ENCODE measurements at regions of chr4 and their contacts with region 1.

Region 1: GRCh38 chr4:7802093-7802726 is 137.5 kb downstream of the AFAP1 start:
- DNase-seq: peak; percentile 80
- H3K4me3 ChIP-seq: no peak overlapping the region; a peak in 1 of 4 replicates
- H3K27ac ChIP-seq: peak overlapping the region; percentile 19 to 67
- H3K4me1 ChIP-seq: peaks cover 20 to 30% of the 10 kb centered on the region in 2 experiments
- H3K27me3 ChIP-seq: no peaks in the 10 kb centered on the region
- CTCF ChIP-seq: peak; percentile 89
- EP300 ChIP-seq: no peak
- RAD21 ChIP-seq: peak; percentile 94

Region 2: DNA sequence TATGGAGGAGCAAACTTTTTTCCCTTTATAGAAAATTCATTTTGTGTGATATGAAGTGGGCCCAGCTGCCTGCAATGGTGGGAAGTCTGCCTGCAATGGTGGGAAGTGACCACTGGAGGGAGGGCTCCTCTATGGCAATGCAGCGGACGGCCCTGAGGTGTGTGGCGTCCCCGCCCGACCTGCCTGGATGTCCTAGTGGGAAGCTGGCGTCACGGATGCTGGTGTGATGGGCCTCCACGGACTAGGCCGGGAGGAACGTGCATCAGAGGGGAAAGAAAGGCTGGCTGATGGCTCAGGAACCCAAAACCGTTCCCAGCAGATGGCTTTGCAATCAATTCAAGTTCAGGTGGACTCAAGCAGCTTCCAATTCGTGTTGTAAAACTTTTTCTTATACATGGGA is 40.5 kb before region 1 on chr4:
- CTCF ChIA-PET with region 1: interaction called, 137 read pairs
- POLR2A ChIA-PET with region 1: no interaction called
- DNase-seq: peak; percentile 91
- H3K4me3 ChIP-seq: no peak overlapping the region; a peak in 1 of 4 replicates
- H3K27ac ChIP-seq: no peak overlapping the region; a peak in 1 of 4 replicates
- H3K4me1 ChIP-seq: peaks cover 0 to 4% of the 10 kb centered on the region in 2 experiments; a peak in 1 of 4 replicates
- H3K27me3 ChIP-seq: no peaks in the 10 kb centered on the region
- CTCF ChIP-seq: peak; percentile 72
- EP300 ChIP-seq: no peak
- RAD21 ChIP-seq: peak; percentile 73

Region 3: GRCh38 chr4:7827991-7828720 is 25.9 kb after region 1 on chr4:
- CTCF ChIA-PET with region 1: interaction called, 228 read pairs
- POLR2A ChIA-PET with region 1: no interaction called
- DNase-seq: peak; percentile 38
- H3K4me3 ChIP-seq: no peak overlapping the region
- H3K27ac ChIP-seq: peak overlapping the region; percentile 80 to 99
- H3K4me1 ChIP-seq: peaks cover 46 to 62% of the 10 kb centered on the region in 2 experiments
- H3K27me3 ChIP-seq: no peaks in the 10 kb centered on the region
- CTCF ChIP-seq: no peak
- EP300 ChIP-seq: peak; percentile 60 to 79; a peak in 2 of 4 replicates
- RAD21 ChIP-seq: no peak

Region 4: DNA sequence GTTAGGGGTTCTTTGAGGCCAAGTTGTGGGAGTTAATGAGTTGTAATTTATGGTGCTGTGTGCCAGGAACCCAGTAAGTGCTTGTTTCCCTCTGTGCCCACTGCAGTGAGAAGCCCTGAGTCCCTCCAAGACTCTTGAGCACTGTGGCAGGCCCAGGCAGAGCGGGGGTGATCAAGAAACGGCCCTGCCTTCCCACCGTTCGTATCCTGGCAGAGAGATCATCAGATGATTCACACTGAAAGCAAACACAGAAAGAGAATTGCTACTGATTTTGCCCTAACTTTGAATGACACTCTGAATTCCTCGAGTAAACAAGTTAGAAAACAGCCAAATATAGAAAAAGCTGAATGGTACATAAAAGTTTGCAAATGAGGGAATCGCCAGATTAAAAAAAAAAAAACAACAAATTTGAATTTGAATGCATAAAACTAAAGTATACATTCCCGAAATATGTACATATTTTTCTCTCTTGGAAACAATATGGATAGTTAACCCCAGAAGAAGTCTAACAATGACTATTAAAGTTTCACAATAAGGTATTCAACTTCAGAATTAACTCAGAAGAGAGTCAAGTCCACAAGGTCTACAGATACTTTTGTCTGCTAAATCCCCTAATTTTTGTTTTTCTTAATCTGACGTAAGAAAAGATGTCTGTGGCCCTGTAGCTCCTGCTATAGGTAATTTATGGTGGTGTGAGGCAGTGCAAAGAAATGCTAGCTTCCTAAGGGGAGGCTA is 65.7 kb after region 1 on chr4:
- CTCF ChIA-PET with region 1: interaction called, 44 read pairs
- POLR2A ChIA-PET with region 1: no interaction called
- DNase-seq: no peak
- H3K4me3 ChIP-seq: no peak overlapping the region
- H3K27ac ChIP-seq: peak overlapping the region in 1 of 2 experiments; percentile 86; a peak in 2 of 4 replicates
- H3K4me1 ChIP-seq: peaks cover 13 to 39% of the 10 kb centered on the region in 2 experiments
- H3K27me3 ChIP-seq: no peaks in the 10 kb centered on the region
- CTCF ChIP-seq: no peak
- EP300 ChIP-seq: no peak
- RAD21 ChIP-seq: no peak

Region 5: GRCh38 chr4:7892212-7893019 is 90.2 kb after region 1 on chr4:
- CTCF ChIA-PET with region 1: interaction called, 19 read pairs
- POLR2A ChIA-PET with region 1: interaction called, 3 read pairs
- DNase-seq: peak; percentile 62
- H3K4me3 ChIP-seq: 0 out of 4 replicates have a peak overlapping the region, but pooled peaks of 1 of the 2 experiments have one; percentile 30
- H3K27ac ChIP-seq: peak overlapping the region; percentile 97 to 98
- H3K4me1 ChIP-seq: peaks cover 58 to 59% of the 10 kb centered on the region in 2 experiments
- H3K27me3 ChIP-seq: no peaks in the 10 kb centered on the region
- CTCF ChIP-seq: no peak
- EP300 ChIP-seq: peak in 1 of 2 experiments; percentile 93; a peak in 2 of 4 replicates
- RAD21 ChIP-seq: no peak; the same call in 1 of the 2 replicates

Region 6: DNA sequence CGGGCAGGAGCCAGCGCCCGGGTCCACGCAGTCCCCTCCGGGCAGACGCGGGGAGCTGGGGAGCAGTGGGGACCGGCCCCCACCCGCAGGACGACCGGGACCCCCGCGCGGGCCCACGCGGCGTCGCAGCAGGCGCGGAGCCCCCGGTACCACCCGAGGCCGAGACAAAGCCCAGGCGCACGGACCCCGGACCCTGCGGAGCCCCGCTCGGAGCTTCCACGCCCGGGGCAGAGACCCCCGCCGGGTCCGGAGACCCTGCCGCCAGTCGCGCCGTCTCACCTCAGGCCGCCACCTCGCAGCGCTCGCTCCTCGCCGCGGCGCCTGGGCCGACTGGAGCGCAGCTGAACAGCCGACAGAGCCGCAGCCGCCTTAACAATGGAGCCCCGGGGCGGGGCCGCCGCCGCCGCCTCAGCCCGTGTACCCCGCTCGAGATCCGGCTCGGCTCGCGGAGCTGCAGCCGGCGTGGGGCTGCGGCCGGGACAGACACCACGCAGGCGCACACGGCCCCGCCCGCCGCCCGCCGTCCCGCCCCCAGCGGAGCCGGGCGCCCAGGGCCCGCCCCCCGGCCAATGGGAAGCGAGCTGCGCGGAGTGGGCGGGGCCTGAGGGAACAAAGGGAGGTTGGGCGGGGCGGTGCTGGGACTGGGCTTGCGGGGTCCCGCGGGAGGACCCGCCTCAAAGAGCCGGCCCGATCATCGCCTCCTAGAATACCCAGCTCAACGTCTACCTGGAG is 137.3 kb after region 1 on chr4 and contains the start of gene AFAP1:
- CTCF ChIA-PET with region 1: interaction called, 116 read pairs
- POLR2A ChIA-PET with region 1: interaction called, 4 read pairs
- DNase-seq: peak; percentile 99
- H3K4me3 ChIP-seq: peak within 1 kb of the TSS; percentile 83 to 95
- H3K27ac ChIP-seq: peak within 1 kb of the TSS; percentile 82 to 85
- H3K4me1 ChIP-seq: peaks cover 15% of the 10 kb centered on the region in 2 experiments; a peak in 2 of 4 replicates
- H3K27me3 ChIP-seq: no peaks in the 10 kb centered on the region
- CTCF ChIP-seq: no peak
- EP300 ChIP-seq: no peak
- RAD21 ChIP-seq: no peak
- polyA plus RNA-seq, gene AFAP1: 40.6 and 67.9 TPM in 2 replicates

Region 7: GRCh38 chr4:7987148-7987989 is 185.2 kb after region 1 on chr4:
- CTCF ChIA-PET with region 1: interaction called, 209 read pairs
- POLR2A ChIA-PET with region 1: no interaction called
- DNase-seq: peak; percentile 86
- H3K4me3 ChIP-seq: no peak overlapping the region; a peak in 1 of 4 replicates
- H3K27ac ChIP-seq: no peak overlapping the region
- H3K4me1 ChIP-seq: no peaks in the 10 kb centered on the region; a peak in 1 of 4 replicates
- H3K27me3 ChIP-seq: no peaks in the 10 kb centered on the region
- CTCF ChIP-seq: peak; percentile 88
- EP300 ChIP-seq: no peak
- RAD21 ChIP-seq: peak; percentile 96

Measured in SK-N-SH (cell line).